ENCODE measurements at regions of chr9 and their contacts with region 1.

Region 1: DNA sequence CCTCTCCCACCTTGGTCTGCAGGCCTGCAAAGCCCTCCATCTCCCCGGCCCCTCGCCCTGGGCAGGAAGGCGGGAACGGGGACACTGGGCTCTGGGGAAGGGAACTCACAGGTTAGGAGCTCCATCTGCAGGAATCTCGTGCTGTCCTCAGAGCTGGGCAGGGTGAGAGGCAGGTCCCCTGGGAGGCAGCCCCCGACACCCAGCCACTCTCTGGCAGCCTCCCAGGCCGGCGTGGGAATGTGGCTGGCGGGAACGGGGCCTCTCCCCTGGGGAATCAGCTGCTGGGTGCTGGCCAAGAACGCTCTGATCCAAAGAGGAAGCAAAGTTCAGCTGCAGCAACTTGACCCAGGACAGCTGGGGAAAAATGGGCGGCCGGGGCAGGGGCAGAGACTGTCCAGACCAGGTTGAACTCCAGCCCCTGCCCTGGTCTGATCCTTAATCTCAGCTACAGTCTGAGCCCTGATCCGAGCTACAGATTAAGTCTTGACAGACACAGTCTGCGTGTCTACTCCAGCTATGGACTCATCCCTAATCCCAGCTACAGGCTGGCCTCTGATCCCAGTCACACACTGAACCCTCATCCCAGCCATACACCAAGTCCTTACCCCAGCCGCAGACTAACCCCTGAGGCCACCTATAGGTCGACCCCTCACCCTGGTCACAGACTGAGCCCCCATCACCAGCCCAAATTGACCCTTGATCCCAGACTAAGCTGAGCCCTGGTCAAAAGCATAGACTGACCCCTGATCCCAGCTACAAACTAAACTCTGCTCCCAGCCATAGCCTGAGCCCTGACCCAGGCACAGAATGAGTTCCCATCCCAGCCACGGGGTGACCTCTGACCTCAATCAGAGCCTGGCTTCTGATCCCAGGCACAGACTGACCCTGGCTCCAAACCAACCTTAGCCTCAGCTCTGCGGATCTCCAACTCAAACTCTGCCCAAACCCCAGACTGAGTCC is 37.3 kb upstream of the EGFL7 start:
- DNase-seq: peak; percentile 84
- H3K4me3 Mint-ChIP-seq: no peak overlapping the region
- H3K27ac Mint-ChIP-seq: peak overlapping the region; percentile 17
- H3K4me1 Mint-ChIP-seq: peaks cover 12% of the 10 kb centered on the region
- H3K27me3 Mint-ChIP-seq: no peaks in the 10 kb centered on the region
- CTCF ChIP-seq: peak; percentile 56

Region 2: DNA sequence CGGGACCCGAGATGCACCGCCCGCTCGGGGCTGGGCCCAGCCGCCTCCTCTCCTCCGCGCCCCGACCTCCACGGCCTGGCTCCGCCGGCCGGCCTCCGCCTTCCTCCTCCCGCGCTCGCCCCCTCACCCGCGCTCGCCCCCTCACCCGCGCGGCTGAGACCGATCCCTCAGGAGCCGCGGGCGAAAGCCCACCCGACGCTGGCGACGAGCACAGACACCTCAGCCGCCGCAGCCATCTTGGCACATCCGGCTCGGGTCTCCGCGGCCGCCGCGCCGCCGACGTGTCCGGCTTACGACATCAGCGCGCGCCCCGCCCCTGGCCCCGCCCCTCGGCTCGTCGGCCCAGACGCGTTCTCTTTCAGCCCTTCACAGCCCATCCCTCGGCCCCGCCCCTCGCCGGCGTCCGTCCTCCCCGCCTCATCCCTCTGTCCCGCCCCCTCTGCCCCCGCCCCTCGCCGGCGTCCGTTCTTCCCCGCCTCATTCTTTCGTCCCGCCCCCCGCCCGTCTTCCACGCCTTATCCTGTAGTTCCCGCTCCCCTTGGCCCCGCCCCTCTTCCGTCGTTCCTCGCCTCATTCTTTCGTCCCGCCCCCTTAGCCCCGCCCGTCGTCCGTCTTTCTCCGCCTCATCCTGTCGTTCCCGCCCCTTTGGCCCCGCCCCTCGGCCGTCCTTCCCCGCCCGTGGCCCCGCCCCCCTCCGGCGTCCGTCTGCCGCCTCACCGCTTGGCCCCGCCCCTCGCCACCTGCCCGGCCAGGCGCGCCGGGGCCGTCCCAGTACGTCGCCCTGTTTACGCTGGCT is 142.4 kb before region 1 on chr9 and contains the start of gene SEC16A:
- CTCF ChIA-PET with region 1: interaction called, 280 read pairs
- POLR2A ChIA-PET with region 1: interaction called, 84 read pairs
- intact Hi-C with region 1: loop called (anchors 1 kb)
- DNase-seq: peak; percentile 98
- H3K4me3 Mint-ChIP-seq: peak within 1 kb of the TSS; percentile 98
- H3K27ac Mint-ChIP-seq: peak within 1 kb of the TSS; percentile 100
- H3K4me1 Mint-ChIP-seq: peaks cover 10% of the 10 kb centered on the region
- H3K27me3 Mint-ChIP-seq: no peaks in the 10 kb centered on the region
- CTCF ChIP-seq: no peak
- total RNA-seq, gene SEC16A: 85.8 and 88.8 TPM in 2 replicates

Region 3: GRCh38 chr9:136539427-136540421 is 85.7 kb before region 1 on chr9:
- CTCF ChIA-PET with region 1: interaction called, 27 read pairs
- POLR2A ChIA-PET with region 1: interaction called, 13 read pairs
- intact Hi-C with region 1: loop called (anchors 1 kb)
- DNase-seq: peak; percentile 93
- H3K4me3 Mint-ChIP-seq: no peak overlapping the region
- H3K27ac Mint-ChIP-seq: no peak overlapping the region
- H3K4me1 Mint-ChIP-seq: peaks cover 5% of the 10 kb centered on the region
- H3K27me3 Mint-ChIP-seq: no peaks in the 10 kb centered on the region
- CTCF ChIP-seq: no peak

Region 4: DNA sequence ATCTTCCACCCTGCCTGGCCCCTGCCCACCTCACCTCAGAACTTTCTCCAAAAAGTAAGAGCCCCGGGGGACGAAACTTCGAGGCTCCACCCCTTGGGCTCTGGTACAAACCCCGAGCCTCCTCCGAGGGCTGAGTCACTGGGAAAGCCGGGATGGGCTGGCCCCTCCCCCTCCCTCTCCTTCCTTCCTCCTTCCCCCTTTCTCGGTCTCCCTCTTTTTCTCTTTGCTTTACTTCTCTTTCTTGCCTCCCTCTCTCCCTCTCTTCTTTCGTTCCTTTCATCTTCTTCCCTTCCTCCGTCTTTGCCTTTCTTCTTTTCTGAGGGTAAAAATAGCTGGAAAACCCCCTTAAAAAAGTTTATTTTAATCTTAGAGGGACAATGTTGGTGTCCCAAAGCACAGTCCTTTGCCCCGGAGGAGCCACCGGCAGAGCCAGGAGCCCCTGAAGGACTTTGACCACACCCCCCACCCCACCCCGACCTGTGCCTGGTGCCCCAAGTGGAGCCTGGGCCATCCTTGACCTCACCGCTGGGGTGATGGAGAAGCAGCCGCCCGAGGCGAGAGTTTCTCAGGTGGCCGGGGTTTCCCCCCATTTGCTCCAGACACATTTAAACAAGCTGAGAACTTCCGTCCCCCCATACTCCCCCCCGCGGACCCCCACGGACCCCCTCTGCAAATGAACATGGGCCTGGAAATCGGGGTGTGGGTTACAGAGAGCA is 73.8 kb before region 1 on chr9:
- CTCF ChIA-PET with region 1: interaction called, 8 read pairs
- POLR2A ChIA-PET with region 1: interaction called, 64 read pairs
- intact Hi-C with region 1: no loop called
- DNase-seq: peak; percentile 92
- H3K4me3 Mint-ChIP-seq: peak overlapping the region; percentile 62
- H3K27ac Mint-ChIP-seq: peak overlapping the region; percentile 86
- H3K4me1 Mint-ChIP-seq: peaks cover 17% of the 10 kb centered on the region
- H3K27me3 Mint-ChIP-seq: no peaks in the 10 kb centered on the region
- CTCF ChIP-seq: no peak

Region 5: GRCh38 chr9:136567651-136568287 is 57.6 kb before region 1 on chr9:
- CTCF ChIA-PET with region 1: interaction called, 4 read pairs
- POLR2A ChIA-PET with region 1: interaction called, 12 read pairs
- intact Hi-C with region 1: no loop called
- DNase-seq: peak; percentile 91
- H3K4me3 Mint-ChIP-seq: peak overlapping the region; percentile 66
- H3K27ac Mint-ChIP-seq: no peak overlapping the region
- H3K4me1 Mint-ChIP-seq: peaks cover 13% of the 10 kb centered on the region
- H3K27me3 Mint-ChIP-seq: no peaks in the 10 kb centered on the region
- CTCF ChIP-seq: no peak

Measured in MCF 10A (cell line).